Cardiac septum (tissue), 1 donor: ENCODE measurements at regions of chr1 and their contacts with region 1.

Region 1: GRCh38 chr1:54886724-54887664 is at the start of gene DHCR24:
- DNase-seq: peak; percentile 93
- total RNA-seq, gene DHCR24: 40.3 TPM

Region 2: DNA sequence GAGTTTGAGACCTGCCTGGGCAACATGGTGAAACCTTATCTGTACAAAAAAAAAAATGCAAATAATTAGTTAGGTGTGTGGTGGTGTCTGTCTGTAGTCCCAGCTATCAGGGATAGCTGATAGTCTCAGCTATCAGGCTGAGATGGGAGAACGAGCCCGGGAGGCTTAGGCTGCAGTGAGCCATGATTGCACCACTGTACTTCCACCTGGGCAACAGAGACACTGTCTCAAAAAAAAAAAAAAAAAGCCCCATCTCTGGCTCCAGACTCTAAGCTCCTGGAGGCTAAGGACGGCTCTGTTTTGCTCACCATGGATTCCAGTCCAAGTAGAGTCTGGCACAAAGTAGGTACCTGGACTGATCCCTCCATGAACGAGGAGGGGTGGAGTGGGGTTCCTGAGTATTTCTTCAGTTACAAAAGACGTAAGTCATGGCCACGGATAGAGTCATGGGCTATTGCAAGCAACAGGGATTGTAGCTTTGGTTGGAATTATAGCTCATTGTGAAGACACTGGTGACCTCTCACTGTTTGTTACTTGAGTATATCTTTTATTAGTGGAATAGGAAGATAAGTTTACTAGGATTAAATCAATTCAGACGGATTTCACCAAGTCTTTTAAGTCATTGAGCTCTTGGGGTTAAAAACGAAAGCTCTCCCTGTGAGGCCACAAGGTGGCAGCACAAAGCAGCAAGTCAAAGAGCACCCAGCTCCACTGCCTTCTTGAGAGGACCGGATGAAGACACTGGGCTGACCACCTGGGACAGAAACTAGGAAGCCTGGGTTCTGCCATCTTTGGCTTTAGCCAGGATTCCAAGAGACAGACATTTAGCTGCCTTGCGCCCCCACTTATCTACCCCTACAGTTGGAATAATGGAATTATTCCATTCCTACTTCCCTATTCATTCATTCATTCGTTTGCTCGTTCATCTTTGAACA is 57.9 kb after region 1 on chr1:
- intact Hi-C with region 1: loop called (anchors 5 kb)
- DNase-seq: peak; percentile 81

Region 3: DNA sequence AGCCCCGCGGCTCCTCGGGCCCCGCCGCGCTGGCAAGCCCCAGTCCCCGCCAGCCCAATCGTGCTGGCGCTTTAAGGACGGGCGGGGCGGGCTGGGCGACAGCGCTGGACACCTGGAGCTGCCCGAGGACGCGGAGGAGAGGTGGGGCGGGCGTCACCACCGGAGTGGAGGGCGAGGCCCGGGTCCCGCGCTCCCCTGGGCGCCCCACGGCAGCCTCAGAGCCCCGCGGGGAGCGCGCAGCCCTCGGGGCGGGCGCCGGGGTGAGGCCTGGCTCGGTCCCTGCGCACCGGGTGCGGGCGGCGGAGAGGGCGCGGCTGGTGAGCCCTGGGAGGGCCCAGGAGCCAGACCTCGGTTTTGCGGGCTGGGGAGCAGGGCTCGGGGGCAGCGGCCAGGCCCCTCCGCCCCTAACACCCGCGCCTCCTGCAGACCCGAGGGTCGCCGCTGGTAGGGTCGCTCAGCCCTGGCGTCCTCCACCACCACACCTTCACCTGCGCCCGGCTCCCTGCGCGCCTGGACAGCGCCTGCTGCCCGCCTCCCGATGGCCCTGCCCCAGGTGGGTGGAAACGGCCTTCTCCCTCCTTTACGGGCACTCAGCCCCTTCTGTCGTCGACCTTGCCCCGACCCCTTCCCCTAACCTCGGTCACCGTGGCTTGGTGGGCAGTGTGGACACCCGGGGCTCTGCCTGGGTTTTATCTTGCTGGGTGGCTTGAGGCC is 93.7 kb after region 1 on chr1 and contains the start of gene TMEM61:
- intact Hi-C with region 1: no loop called
- DNase-seq: no peak
- total RNA-seq, gene TMEM61: not detected